ENCODE measurements at regions of chr2 and their contacts with region 1.

Region 1: DNA sequence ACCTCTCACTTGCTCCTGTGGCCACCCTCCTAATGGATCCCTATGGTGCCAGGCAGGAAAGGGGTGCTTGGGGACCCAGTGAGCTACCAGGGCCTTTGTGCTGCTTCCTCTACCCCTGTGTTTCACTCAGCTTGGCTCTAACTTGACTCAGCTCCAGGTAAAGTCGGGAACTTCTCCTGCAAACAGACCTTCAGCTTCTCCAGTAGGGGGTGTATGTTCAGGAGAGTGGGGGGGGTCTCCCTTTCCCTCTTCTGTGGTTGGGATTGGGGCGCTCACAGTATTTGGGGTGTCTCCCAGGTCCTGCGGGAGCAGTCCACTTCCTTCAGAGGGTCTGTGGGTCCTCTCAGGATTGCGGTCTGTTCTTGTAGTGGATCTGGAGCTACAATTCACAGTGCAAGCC is 26.2 kb upstream of the SAP130 start:
- DNase-seq: no peak
- H3K4me3 ChIP-seq: no peak overlapping the region
- H3K27ac ChIP-seq: no peak overlapping the region
- H3K4me1 ChIP-seq: no peaks in the 10 kb centered on the region
- H3K27me3 ChIP-seq: no peaks in the 10 kb centered on the region
- CTCF ChIP-seq: peak in 1 of 3 experiments; percentile 37; a peak in 1 of 4 replicates
- EP300 ChIP-seq: no peak
- POLR2A ChIP-seq: no peak
- RAD21 ChIP-seq: no peak

Region 2: GRCh38 chr2:128027278-128027800 is 26.8 kb before region 1 on chr2:
- CTCF ChIA-PET with region 1: no interaction called
- POLR2A ChIA-PET with region 1: no interaction called
- DNase-seq: peak; percentile 95 to 96
- H3K4me3 ChIP-seq: peak overlapping the region; percentile 68 to 99 (median 86)
- H3K27ac ChIP-seq: peak overlapping the region; percentile 84; the same call in 1 of the 2 replicates
- H3K4me1 ChIP-seq: peaks cover 0 to 8% (median 4%) of the 10 kb centered on the region in 4 experiments; a peak in 5 of 7 replicates
- H3K27me3 ChIP-seq: peaks cover 0 to 6% (median 2%) of the 10 kb centered on the region in 4 experiments; a peak in 2 of 7 replicates
- CTCF ChIP-seq: no peak
- EP300 ChIP-seq: no peak
- POLR2A ChIP-seq: no peak
- RAD21 ChIP-seq: no peak

Region 3: GRCh38 chr2:128037649-128038048 is 16.5 kb before region 1 on chr2:
- CTCF ChIA-PET with region 1: interaction called, 12 read pairs
- POLR2A ChIA-PET with region 1: no interaction called
- DNase-seq: peak in 1 of 2 experiments; percentile 56
- H3K4me3 ChIP-seq: no peak overlapping the region
- H3K27ac ChIP-seq: no peak overlapping the region
- H3K4me1 ChIP-seq: no peaks in the 10 kb centered on the region; a peak in 1 of 7 replicates
- H3K27me3 ChIP-seq: no peaks in the 10 kb centered on the region
- CTCF ChIP-seq: peak in 2 of 3 experiments; percentile 68 to 73; a peak in 3 of 4 replicates
- EP300 ChIP-seq: no peak
- POLR2A ChIP-seq: no peak
- RAD21 ChIP-seq: peak; percentile 54 to 62